Stomach (tissue), 19 donors: ENCODE measurements at regions of chr19 and their contacts with region 1.

Region 1: DNA sequence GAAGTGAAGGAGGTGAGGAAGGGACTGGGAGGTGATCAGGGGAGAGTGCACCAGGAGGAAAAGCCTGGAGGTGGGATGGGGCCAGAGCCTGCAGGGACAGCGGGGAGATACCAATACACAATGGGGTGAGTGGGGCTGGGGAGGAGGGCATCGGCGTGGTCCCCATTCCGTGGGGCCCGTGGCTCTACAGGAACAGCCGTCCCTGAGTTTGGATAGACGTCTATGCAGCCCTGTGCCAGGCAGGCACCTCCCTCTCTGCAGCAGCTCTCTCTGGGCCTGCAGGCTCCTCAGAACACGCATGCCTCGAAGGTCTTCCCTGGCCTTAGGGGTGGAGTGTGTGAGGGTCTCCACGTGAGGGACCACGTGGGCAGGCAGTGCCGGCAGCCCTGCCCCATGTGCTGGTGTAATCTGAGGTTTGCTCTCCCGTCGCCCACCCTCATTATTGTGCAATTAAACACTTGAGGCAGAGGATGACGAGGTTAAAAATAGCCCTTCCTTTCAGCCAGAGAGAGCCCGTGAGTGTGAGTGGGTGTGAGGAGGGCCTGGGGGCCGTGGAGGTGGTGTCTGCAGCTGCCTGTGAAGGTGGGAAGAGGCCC is 16.5 kb downstream of the C2CD4C start:
- DNase-seq: no peak
- H3K4me3 ChIP-seq: no peak overlapping the region
- H3K27ac ChIP-seq: no peak overlapping the region
- H3K4me1 ChIP-seq: no peaks in the 10 kb centered on the region
- H3K27me3 ChIP-seq: peaks cover 0 to 33% (median 3%) of the 10 kb centered on the region in 3 donors
- CTCF ChIP-seq: no peak
- EP300 ChIP-seq: no peak
- POLR2A ChIP-seq: no peak

Region 2: DNA sequence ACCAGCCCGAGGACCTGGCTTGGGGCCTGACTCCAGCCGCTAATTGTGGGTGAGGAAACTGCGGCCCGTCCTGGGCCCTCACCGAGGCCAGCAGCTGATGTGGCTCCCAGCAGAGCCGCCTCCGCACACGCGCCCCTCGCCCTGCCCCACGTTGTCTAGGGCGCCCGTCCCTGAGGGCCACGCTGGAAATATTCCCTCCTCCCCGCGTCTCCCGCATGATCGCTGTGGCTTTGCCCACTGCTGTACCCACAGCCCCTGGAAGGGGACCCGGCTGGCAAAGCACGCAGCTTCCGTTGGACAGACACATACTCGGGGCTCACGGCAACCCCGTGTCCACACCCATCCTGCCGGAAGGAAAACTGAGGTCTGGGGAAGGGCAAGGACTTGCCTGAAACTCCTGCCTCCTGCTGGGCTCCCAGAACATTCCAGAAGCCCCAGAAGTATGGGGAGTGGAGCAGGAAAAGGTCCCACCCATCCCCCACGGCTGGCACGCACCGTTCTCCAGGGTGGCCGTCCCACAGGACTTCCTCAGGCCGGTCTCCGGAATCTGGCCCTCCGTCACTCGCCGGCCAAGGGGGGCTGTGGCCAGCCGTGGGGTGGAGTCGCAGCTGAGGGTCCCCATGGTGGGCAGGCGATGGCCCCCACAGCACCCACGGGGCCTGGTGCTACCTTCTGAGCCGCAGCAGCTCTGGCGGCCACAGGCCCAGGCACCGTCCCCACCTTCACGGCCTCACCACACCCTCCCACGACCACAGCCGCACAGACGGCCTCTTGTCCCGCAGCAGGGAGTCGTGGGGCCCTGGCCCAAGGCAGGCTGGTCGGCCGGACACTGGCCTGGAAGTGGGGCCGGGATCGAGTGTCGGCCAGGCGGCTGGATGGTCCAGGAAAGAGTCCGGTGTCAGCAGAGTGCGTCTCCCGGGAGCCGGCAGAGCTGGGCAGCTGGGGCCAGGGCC is 81.9 kb after region 1 on chr19:
- intact Hi-C with region 1: loop called (anchors 10 kb)
- DNase-seq: no peak
- H3K4me3 ChIP-seq: no peak overlapping the region
- H3K27ac ChIP-seq: no peak overlapping the region
- H3K4me1 ChIP-seq: no peaks in the 10 kb centered on the region
- H3K27me3 ChIP-seq: peaks cover 0 to 22% (median 3%) of the 10 kb centered on the region in 3 donors
- CTCF ChIP-seq: no peak
- EP300 ChIP-seq: no peak
- POLR2A ChIP-seq: no peak